Dendritic cell treated with granulocyte-macrophage colony-stimulating factor and Interleukin-4, amounts not matched to agents 40 ng/mL and 50 ng/mL, for 4 days (primary cell): ENCODE measurements at regions of chr1 and their contacts with region 1.

Region 1: DNA sequence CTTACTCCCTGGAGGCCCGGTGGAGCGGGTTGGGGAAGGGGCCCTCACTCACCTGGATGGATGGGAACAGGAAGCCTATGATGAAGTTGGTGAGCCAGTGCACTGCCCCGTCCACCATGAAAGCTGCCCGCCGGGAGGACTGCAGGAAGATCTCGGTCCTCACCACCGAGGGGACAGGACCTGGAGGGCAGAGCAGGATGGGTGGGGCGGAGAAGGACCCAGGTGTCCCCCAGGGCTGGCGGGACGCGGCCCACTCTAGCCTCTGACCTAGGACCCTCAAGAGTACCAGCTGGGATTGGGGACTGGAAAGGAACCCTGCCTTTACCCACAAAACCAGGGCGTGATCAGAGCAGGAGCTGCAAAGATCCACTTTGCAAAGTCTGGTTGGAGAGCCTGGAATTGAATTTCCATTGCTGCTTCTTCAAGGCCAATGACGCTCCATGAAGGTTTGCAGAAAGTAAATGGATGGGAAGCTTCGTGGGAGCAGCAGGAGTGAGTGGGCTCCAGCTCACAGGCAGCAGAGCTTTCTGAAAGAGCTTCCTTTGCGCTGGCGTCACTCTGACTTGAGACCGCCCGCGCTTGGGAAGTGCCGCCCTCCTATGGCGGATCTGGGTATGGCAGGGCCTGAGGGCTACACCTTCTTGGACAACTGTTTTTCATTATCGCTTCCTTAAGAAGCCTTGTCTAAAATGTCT is 21.4 kb downstream of the SLC2A7 start:
- H3K4me3 Mint-ChIP-seq: no peak overlapping the region
- H3K27ac Mint-ChIP-seq: no peak overlapping the region
- H3K4me1 Mint-ChIP-seq: peaks cover 46% of the 10 kb centered on the region
- H3K27me3 Mint-ChIP-seq: peaks cover 14% of the 10 kb centered on the region

Region 2: GRCh38 chr1:8910914-8911313 is 93.9 kb before region 1 on chr1:
- intact Hi-C with region 1: loop called (anchors 5 kb)
- H3K4me3 Mint-ChIP-seq: no peak overlapping the region
- H3K27ac Mint-ChIP-seq: no peak overlapping the region
- H3K4me1 Mint-ChIP-seq: peaks cover 19% of the 10 kb centered on the region
- H3K27me3 Mint-ChIP-seq: peaks cover 1% of the 10 kb centered on the region

Region 3: DNA sequence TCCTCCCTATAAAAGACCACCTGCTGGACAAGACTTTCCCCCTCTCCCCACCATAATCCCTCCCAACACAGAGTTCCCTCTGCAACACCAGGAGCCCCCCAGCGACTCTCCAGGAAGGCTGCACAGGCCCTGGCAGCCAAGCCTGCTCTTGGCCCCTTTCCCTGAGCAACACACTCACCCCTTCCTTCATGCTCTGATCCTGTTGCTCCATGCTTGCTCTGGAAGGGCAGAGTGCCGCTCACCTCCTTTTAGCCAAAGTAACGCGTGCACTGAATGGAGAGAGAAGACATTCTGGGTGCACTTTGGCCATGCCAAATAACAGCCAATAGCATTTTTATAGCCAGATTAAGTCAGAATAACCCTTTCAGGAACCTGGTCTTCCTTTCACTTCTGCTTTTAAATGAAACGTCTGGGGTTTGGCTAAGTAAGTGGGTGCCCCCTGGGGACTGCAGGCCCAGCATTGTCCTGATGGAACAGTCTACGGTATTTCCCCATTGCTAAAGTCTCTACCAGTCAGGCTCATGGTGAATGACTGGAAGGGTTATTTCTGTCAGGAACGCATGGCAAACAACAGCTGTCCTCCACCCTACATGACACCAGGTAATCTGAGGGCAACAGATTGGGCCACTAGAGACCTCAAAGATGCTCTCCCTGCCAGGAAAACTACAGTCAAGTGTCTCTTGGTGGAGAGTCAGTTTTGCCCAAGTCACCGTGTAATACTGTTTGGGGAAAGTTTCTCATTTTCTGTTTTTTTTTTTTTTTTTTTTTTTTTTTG is 64.7 kb after region 1 on chr1 and contains the start of gene SLC2A5:
- intact Hi-C with region 1: loop called (anchors 5 kb)
- H3K4me3 Mint-ChIP-seq: peak within 1 kb of the TSS; percentile 56
- H3K27ac Mint-ChIP-seq: peak within 1 kb of the TSS; percentile 74
- H3K4me1 Mint-ChIP-seq: peaks cover 53% of the 10 kb centered on the region
- H3K27me3 Mint-ChIP-seq: peaks cover 3% of the 10 kb centered on the region

Region 4: GRCh38 chr1:9101510-9102146 is 96.8 kb after region 1 on chr1:
- intact Hi-C with region 1: loop called (anchors 1 kb)
- H3K4me3 Mint-ChIP-seq: no peak overlapping the region
- H3K27ac Mint-ChIP-seq: no peak overlapping the region
- H3K4me1 Mint-ChIP-seq: no peaks in the 10 kb centered on the region
- H3K27me3 Mint-ChIP-seq: no peaks in the 10 kb centered on the region